SK-N-SH (cell line): ENCODE measurements at regions of chr3 and their contacts with region 1.

Region 1: DNA sequence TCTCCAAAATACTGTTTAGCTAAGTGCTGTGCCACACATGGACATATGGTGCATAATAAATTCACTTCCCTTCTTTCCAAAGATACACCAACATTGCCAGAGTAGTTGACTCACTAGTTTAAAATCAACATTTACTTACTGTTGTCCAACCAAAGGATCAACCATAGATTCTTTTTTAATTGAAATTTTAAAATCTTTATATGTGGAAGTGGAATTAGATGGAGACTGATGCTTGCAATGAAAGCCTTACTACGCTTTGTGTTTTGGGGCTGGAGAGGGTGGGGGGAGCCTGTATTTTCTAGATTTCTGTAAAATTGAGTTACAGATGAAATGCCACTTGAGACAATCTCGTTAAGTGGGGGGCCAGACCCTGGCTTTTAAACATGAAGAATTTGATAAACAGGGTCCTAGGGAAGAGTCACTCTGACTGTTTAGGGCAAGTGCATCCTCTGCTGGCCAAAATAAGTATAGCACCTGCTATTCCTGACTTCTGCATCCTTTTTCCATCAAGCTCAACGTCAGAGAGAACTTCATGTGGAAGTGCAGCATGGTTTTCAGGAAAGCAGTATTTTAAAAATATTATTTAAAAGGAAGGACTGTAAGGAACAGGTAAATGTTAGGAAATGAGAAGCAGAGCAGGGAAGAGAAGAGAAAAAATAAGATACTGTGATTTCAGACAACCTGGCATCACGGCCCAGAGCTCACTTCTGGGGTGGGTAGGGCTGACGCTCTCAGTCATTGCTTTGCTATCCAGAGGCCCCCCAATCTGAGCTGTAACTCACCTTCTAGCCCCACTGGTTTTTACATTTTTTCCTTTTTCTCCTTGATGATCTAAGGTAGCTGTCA is 76.7 kb downstream of the BOC start:
- DNase-seq: peak; percentile 72
- H3K4me3 ChIP-seq: peak overlapping the region in 1 of 2 experiments; percentile 8; a peak in 1 of 4 replicates
- H3K27ac ChIP-seq: peak overlapping the region in 1 of 2 experiments; percentile 40; a peak in 2 of 4 replicates
- H3K4me1 ChIP-seq: peaks cover 10 to 15% of the 10 kb centered on the region in 2 experiments
- H3K27me3 ChIP-seq: no peaks in the 10 kb centered on the region
- CTCF ChIP-seq: peak; percentile 99
- EP300 ChIP-seq: no peak
- RAD21 ChIP-seq: peak; percentile 100

Region 2: DNA sequence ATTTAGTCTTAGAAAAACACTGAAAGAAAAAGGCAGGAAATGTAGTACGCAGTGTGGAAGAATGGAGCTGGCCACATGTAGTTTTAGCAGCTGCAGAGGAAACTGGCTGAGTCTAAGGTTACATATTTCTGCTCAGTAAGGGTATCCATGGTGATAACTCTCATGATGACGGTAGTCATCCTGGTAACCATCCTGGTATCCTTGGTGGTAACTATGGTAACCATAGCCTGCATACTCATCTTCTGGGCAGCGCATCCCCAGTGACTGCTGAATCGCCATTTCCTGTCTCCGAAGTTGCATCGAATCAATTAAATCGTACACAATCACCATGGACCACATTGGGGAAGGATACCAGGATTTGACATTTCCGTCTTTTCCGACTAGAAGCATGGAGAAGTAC is 682.7 kb before region 1 on chr3:
- CTCF ChIA-PET with region 1: no interaction called
- POLR2A ChIA-PET with region 1: no interaction called
- DNase-seq: peak; percentile 16
- H3K4me3 ChIP-seq: no peak overlapping the region
- H3K27ac ChIP-seq: peak overlapping the region; percentile 26 to 96; a peak in 3 of 4 replicates
- H3K4me1 ChIP-seq: peaks cover 4 to 5% of the 10 kb centered on the region in 2 experiments; a peak in 3 of 4 replicates
- H3K27me3 ChIP-seq: no peaks in the 10 kb centered on the region
- CTCF ChIP-seq: no peak
- EP300 ChIP-seq: no peak
- RAD21 ChIP-seq: no peak

Region 3: GRCh38 chr3:113035387-113035982 is 252.5 kb before region 1 on chr3:
- CTCF ChIA-PET with region 1: interaction called, 27 read pairs
- POLR2A ChIA-PET with region 1: no interaction called
- DNase-seq: peak; percentile 69
- H3K4me3 ChIP-seq: no peak overlapping the region
- H3K27ac ChIP-seq: no peak overlapping the region
- H3K4me1 ChIP-seq: no peaks in the 10 kb centered on the region
- H3K27me3 ChIP-seq: no peaks in the 10 kb centered on the region
- CTCF ChIP-seq: peak; percentile 79
- EP300 ChIP-seq: no peak
- RAD21 ChIP-seq: peak; percentile 69

Region 4: DNA sequence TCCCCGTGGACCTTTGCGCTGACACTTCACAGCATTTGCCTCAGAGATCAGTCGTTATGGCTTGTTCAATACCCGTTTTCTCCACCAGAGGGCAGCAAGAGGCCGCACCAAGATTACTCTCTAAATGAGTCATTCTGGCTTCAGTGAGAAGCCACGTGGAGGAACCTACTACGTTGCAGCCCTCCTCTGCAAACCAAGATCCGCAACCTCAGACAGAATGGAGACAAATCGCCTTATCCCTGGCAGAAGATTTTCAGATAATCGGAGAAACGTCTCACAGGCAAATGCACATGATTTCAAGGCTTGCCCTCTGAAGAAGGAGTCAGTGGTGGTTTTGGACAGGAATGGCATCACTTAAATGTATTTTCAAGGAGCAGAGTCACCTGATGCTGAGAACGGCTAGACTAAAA is 236.7 kb before region 1 on chr3:
- CTCF ChIA-PET with region 1: interaction called, 120 read pairs
- POLR2A ChIA-PET with region 1: interaction called, 3 read pairs
- DNase-seq: peak; percentile 68
- H3K4me3 ChIP-seq: no peak overlapping the region
- H3K27ac ChIP-seq: peak overlapping the region in 1 of 2 experiments; percentile 19; a peak in 1 of 4 replicates
- H3K4me1 ChIP-seq: peaks cover 3 to 5% of the 10 kb centered on the region in 2 experiments; a peak in 3 of 4 replicates
- H3K27me3 ChIP-seq: no peaks in the 10 kb centered on the region
- CTCF ChIP-seq: peak; percentile 90
- EP300 ChIP-seq: no peak
- RAD21 ChIP-seq: peak; percentile 96

Region 5: GRCh38 chr3:113136071-113136470 is 152.0 kb before region 1 on chr3:
- CTCF ChIA-PET with region 1: interaction called, 44 read pairs
- POLR2A ChIA-PET with region 1: interaction called, 3 read pairs
- DNase-seq: no peak
- H3K4me3 ChIP-seq: no peak overlapping the region
- H3K27ac ChIP-seq: no peak overlapping the region
- H3K4me1 ChIP-seq: no peaks in the 10 kb centered on the region; a peak in 1 of 4 replicates
- H3K27me3 ChIP-seq: no peaks in the 10 kb centered on the region
- CTCF ChIP-seq: peak; percentile 47
- EP300 ChIP-seq: no peak
- RAD21 ChIP-seq: peak; percentile 68

Region 6: GRCh38 chr3:113148286-113148685 is 139.7 kb before region 1 on chr3:
- CTCF ChIA-PET with region 1: interaction called, 10 read pairs
- POLR2A ChIA-PET with region 1: interaction called, 5 read pairs
- DNase-seq: peak; percentile 59
- H3K4me3 ChIP-seq: no peak overlapping the region
- H3K27ac ChIP-seq: peak overlapping the region in 1 of 2 experiments; percentile 99; a peak in 2 of 4 replicates
- H3K4me1 ChIP-seq: peaks cover 0 to 41% of the 10 kb centered on the region in 2 experiments; a peak in 3 of 4 replicates
- H3K27me3 ChIP-seq: no peaks in the 10 kb centered on the region
- CTCF ChIP-seq: no peak
- EP300 ChIP-seq: peak in 1 of 2 experiments; percentile 53; a peak in 2 of 4 replicates
- RAD21 ChIP-seq: peak; percentile 25; the same call in 1 of the 2 replicates

Region 7: GRCh38 chr3:113211330-113212149 is 76.5 kb before region 1 on chr3 and contains the start of gene BOC:
- CTCF ChIA-PET with region 1: interaction called, 12 read pairs
- POLR2A ChIA-PET with region 1: no interaction called
- DNase-seq: peak; percentile 76
- H3K4me3 ChIP-seq: peak within 1 kb of the TSS; percentile 68 to 75
- H3K27ac ChIP-seq: peak within 1 kb of the TSS; percentile 42 to 74; a peak in 3 of 4 replicates
- H3K4me1 ChIP-seq: peaks cover 0 to 22% of the 10 kb centered on the region in 2 experiments; a peak in 2 of 4 replicates
- H3K27me3 ChIP-seq: no peaks in the 10 kb centered on the region
- CTCF ChIP-seq: no peak
- EP300 ChIP-seq: no peak; a peak in 1 of 4 replicates
- RAD21 ChIP-seq: no peak
- polyA plus RNA-seq, gene BOC: 5.8 and 6.6 TPM in 2 replicates

Region 8: DNA sequence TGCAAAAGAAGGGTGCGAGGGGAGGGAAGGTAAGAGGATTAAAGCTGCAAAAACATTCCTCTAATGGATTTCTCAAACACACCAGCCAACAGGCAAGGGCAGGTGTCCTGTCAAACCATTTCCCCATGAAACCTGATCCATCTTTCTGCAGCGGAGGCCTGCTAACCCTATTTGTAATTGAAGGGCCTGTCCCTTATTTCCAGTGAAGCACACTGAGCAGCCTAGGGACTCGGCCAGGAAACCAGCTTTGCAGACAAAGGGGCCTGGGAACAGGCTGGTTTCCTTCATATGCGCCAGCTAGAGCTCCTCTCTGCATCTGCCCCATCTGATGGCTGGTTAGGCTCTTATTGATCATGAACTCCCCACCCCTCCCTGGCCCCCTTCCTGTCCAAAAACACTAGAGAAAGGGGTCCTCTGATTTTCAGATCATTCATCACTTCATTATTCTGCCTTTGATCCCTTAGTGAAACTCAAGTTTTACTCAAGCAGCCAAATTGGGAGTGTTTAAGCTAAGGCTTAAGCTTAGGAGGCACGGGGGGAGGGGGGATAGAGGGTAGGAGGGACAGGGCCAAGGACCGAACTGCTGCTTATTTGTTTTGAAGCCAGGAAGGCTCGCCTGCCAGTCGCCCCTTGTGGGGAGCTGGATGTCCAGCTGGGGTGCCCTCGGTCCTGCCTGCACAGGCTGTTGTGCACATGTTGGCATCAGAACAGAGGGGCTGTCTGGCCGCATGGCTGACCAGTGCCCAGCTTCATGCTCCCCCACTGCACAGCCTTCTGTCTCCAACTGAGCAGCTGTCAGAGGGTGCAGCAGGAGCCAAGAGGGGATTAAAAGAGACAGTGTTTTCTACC is 23.5 kb before region 1 on chr3:
- CTCF ChIA-PET with region 1: interaction called, 19 read pairs
- POLR2A ChIA-PET with region 1: no interaction called
- DNase-seq: no peak
- H3K4me3 ChIP-seq: no peak overlapping the region
- H3K27ac ChIP-seq: no peak overlapping the region
- H3K4me1 ChIP-seq: peaks cover 0 to 18% of the 10 kb centered on the region in 2 experiments; a peak in 1 of 4 replicates
- H3K27me3 ChIP-seq: no peaks in the 10 kb centered on the region
- CTCF ChIP-seq: no peak
- EP300 ChIP-seq: no peak
- RAD21 ChIP-seq: no peak